ENCODE measurements at regions of chr10 and their contacts with region 1.

Region 1: GRCh38 chr10:59793919-59794318 is 40.7 kb upstream of the MRLN start:
- DNase-seq: peak; percentile 92
- ATAC-seq: peak; percentile 97
- H3K4me3 ChIP-seq: peak overlapping the region; percentile 25; the same call in 1 of the 2 replicates
- H3K27ac ChIP-seq: peak overlapping the region; percentile 83
- H3K4me1 ChIP-seq: peaks cover 27% of the 10 kb centered on the region
- H3K27me3 ChIP-seq: no peaks in the 10 kb centered on the region
- CTCF ChIP-seq: no peak

Region 2: DNA sequence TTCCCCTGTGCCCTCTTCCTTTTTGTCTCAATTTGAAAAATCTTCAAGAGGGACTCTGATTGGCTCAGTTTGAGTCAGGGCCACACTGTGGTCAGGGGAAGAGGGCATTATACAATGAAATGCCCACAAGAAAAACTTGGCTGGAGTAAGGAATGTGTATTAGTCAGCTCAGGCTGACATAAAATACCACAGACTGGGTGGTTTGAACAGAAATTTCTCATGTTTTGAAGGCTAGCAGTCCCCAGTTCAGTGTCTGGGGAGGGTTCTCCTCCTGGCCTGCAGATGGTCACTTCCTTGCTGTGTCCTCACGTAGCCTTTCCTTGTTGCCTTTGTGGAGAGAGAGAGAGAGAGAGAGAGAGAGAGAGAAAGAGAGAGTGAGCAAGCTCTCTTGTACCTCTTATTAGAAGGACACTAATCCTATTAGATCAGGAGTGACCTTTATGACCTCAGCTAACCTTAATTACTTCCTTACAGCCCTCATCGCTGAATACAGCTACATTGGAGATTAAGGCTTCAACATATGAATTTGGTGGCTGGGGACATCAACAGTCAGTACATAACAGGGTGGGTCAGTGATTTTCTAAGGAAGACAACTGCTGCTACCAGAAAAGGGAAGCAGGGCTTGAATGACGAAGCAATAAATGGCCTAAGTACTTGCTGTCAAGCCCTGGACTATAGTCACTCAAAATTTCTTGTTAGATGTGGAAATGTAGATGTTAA is 405.8 kb before region 1 on chr10:
- CTCF ChIA-PET with region 1: no interaction called
- POLR2A ChIA-PET with region 1: no interaction called
- intact Hi-C with region 1: no loop called
- DNase-seq: peak; percentile 82
- ATAC-seq: peak; percentile 60
- H3K4me3 ChIP-seq: no peak overlapping the region
- H3K27ac ChIP-seq: peak overlapping the region; percentile 15; the same call in 1 of the 2 replicates
- H3K4me1 ChIP-seq: peaks cover 20% of the 10 kb centered on the region
- H3K27me3 ChIP-seq: peaks cover 7% of the 10 kb centered on the region
- CTCF ChIP-seq: no peak

Region 3: GRCh38 chr10:59561477-59562121 is 232.3 kb before region 1 on chr10:
- CTCF ChIA-PET with region 1: no interaction called
- POLR2A ChIA-PET with region 1: no interaction called
- intact Hi-C with region 1: no loop called
- DNase-seq: peak; percentile 54
- ATAC-seq: peak; percentile 75
- H3K4me3 ChIP-seq: no peak overlapping the region
- H3K27ac ChIP-seq: no peak overlapping the region
- H3K4me1 ChIP-seq: 0 out of 2 replicates have a peak, but pooled peaks cover 6% of the 10 kb centered on the region
- H3K27me3 ChIP-seq: no peaks in the 10 kb centered on the region
- CTCF ChIP-seq: no peak

Region 4: DNA sequence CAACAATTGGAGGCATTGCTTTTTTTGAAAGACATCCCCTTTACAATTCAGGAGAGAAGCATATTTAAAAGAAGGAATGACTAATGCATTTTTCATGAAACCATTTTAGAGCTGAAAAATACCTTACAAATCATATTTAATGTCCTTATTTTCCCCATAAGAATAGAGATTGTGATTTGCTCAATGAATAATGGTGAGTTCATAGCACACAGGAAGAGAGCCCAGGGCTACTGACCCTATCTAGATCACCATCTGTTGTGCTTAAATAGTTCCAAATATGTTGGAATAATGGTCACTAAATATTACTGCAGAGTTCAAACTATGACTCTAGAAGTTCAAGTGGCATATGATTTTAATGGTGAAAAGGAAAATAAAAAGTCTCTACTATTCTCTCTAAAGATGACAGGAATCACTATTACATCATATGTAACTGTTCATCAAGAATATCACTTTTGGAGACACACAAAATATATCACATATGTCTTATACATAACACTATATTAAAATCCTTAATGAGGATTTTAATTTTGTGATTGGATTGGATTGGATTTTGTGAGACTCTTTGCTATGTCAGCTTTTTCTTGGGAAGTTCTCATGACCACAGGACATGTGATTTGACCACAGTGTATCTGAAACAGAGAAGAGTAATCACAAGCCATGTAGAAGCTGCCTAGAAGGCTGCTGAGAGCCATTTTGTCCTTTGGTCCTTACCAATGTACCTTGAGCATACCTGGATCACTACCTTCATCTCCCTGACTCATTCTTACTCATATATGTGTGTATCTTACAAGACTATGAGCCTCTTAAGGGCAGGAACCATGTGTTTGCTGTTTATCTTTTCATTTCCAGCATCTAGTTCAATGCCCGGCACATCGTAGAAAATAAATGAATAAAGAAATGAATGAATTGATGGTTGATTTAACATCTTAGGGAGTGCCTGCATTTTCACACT is 110.7 kb before region 1 on chr10:
- CTCF ChIA-PET with region 1: no interaction called
- POLR2A ChIA-PET with region 1: no interaction called
- intact Hi-C with region 1: no loop called
- DNase-seq: peak; percentile 93
- ATAC-seq: peak; percentile 78
- H3K4me3 ChIP-seq: no peak overlapping the region
- H3K27ac ChIP-seq: peak overlapping the region; percentile 80
- H3K4me1 ChIP-seq: peaks cover 52% of the 10 kb centered on the region
- H3K27me3 ChIP-seq: no peaks in the 10 kb centered on the region
- CTCF ChIP-seq: no peak

Region 5: DNA sequence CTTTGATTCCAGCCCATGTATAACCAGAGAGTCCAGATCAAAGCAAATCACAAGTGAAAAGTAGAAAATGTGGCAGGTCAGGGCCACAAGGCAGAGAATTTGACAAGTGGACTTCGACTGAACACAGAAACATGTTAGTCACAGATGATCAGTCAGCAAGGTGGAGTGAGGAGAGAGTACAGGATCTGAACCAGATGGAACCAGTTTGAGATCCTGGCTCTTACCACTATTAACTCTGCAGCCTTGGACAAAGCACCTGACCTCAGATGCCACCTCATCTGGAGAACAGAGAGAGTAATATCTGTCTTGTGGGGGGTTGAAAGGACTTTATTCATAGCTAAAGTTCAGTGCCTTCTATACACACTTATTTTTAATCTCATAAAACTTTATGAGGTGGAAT is 45.1 kb before region 1 on chr10:
- CTCF ChIA-PET with region 1: interaction called, 3 read pairs
- POLR2A ChIA-PET with region 1: interaction called, 3 read pairs
- intact Hi-C with region 1: loop called (anchors 1 kb)
- DNase-seq: peak; percentile 82
- ATAC-seq: peak; percentile 93
- H3K4me3 ChIP-seq: no peak overlapping the region
- H3K27ac ChIP-seq: peak overlapping the region; percentile 76
- H3K4me1 ChIP-seq: peaks cover 14% of the 10 kb centered on the region
- H3K27me3 ChIP-seq: no peaks in the 10 kb centered on the region
- CTCF ChIP-seq: no peak

Region 6: DNA sequence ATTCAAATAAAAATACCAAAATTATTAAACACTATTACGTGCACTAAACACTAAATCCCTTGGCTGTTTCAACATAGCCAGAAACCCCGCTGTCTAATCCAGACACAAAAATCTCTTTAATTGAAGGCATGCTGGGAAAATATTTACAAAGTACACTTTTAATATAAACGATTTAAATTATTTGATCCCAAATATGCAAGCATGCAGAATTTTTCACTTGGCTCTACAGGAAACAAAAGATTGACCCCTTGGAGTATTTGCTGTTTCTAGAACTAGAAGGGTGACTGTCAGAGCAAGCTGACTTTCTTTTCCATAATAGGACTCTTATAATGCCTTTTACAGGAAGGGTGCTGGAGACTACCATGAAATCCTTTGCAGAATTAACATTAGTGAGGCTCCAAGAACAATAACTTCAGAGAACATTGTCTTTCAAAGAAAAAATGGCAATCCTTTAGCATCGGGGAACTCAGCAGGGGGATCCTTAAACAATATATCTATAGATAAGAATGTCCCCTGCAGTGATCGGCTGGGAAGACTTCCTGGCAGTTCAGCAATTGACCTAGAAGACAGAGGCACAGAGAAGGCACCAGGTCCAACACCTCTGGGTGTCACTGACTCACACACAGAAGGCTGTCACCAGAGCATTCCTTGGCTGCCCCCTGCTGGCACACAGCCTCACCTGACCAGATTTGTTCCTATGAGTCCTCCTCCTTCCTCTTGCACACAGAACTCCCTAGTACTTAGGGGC is 15.2 kb after region 1 on chr10:
- CTCF ChIA-PET with region 1: no interaction called
- POLR2A ChIA-PET with region 1: no interaction called
- intact Hi-C with region 1: no loop called
- DNase-seq: peak; percentile 93
- ATAC-seq: peak; percentile 96
- H3K4me3 ChIP-seq: no peak overlapping the region
- H3K27ac ChIP-seq: no peak overlapping the region
- H3K4me1 ChIP-seq: no peaks in the 10 kb centered on the region
- H3K27me3 ChIP-seq: no peaks in the 10 kb centered on the region
- CTCF ChIP-seq: peak; percentile 99